OCI-LY7 (cell line): ENCODE measurements at regions of chr3 and their contacts with region 1.

Region 1: DNA sequence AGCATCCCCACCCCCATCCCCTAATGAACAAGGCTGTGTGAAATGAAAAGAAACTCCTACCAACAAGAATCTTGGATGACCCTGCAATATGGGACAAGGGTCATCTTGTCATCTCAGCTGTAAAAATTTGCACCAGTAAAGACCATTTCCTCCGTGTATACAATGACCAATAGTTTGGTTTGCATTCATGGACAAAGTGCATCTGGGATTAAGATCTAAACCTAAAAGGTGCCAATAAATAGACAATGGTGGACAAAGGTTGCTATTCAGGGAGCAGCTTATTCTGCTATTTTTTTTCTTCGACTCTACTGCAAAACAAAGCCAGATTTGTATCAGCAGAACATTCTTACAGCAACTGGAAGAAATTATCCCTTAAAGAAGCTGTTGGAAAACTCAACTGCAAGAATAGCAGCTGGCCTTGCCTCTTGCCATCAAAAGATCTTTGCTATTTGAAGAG is 8.0 kb downstream of the MGLL start:
- DNase-seq: no peak
- H3K4me3 ChIP-seq: no peak overlapping the region
- H3K27ac ChIP-seq: no peak overlapping the region
- H3K4me1 ChIP-seq: no peaks in the 10 kb centered on the region
- CTCF ChIP-seq: no peak

Region 2: GRCh38 chr3:127840671-127841070 is 26.3 kb after region 1 on chr3:
- CTCF ChIA-PET with region 1: interaction called, 10 read pairs
- POLR2A ChIA-PET with region 1: no interaction called
- intact Hi-C with region 1: no loop called
- DNase-seq: no peak
- H3K4me3 ChIP-seq: no peak overlapping the region
- H3K27ac ChIP-seq: no peak overlapping the region
- H3K4me1 ChIP-seq: peaks cover 5% of the 10 kb centered on the region
- CTCF ChIP-seq: no peak